ENCODE measurements at regions of chr6 and their contacts with region 1.

Region 1: GRCh38 chr6:108689247-108690161 is 128.8 kb downstream of the FOXO3 start:
- DNase-seq: peak; percentile 93
- H3K4me3 Mint-ChIP-seq: peak overlapping the region; percentile 49
- H3K27ac Mint-ChIP-seq: peak overlapping the region; percentile 92
- H3K4me1 Mint-ChIP-seq: peaks cover 66% of the 10 kb centered on the region
- H3K27me3 Mint-ChIP-seq: no peaks in the 10 kb centered on the region
- CTCF ChIP-seq: no peak

Region 2: DNA sequence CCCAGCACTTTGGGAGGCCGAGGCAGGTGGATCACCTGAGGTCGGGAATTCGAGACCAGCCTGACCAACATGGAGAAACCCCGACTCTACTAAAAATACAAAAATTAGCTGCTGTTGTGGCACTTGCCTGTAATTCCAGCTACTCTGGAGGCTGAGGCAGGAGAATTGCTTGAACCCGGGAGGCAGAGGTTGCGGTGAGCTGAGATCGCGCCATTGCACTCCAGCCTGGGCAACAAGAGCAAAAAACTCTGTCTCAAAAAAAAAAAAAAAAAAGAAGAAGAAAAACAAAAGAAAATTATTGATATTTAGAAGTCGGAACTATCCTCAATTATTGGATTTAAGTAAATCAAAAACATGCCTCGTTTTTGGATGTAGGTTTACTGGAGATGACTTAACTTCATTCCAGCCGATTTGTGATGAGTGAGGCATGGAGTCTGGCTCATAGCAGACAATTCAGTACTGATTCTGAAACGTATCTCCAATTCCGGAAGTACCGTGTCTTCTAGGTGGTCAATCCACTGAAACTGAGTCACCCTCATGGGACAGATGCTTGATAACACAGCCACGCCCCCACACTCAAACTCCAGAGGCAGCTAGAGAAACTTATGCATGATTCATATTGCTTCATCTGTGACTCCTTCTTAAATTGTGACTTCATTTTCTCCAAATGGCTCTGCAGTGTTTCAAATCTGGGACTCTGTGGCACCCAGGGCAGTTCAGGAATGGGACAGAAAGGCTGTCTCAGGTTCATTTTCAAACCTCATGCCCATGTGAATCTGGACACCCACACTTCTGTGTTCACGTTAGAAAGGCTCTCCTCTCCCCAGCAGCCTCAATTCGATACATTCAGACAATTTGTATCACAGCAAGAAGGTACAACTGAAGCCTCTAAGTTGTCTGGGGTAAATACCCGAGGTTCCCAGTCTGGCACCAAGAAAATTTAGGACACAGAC is 48.4 kb after region 1 on chr6:
- CTCF ChIA-PET with region 1: interaction called, 3 read pairs
- intact Hi-C with region 1: loop called (anchors 5 kb)
- DNase-seq: peak; percentile 83
- H3K4me3 Mint-ChIP-seq: peak overlapping the region; percentile 56
- H3K27ac Mint-ChIP-seq: peak overlapping the region; percentile 99
- H3K4me1 Mint-ChIP-seq: peaks cover 81% of the 10 kb centered on the region
- H3K27me3 Mint-ChIP-seq: no peaks in the 10 kb centered on the region
- CTCF ChIP-seq: no peak

Region 3: DNA sequence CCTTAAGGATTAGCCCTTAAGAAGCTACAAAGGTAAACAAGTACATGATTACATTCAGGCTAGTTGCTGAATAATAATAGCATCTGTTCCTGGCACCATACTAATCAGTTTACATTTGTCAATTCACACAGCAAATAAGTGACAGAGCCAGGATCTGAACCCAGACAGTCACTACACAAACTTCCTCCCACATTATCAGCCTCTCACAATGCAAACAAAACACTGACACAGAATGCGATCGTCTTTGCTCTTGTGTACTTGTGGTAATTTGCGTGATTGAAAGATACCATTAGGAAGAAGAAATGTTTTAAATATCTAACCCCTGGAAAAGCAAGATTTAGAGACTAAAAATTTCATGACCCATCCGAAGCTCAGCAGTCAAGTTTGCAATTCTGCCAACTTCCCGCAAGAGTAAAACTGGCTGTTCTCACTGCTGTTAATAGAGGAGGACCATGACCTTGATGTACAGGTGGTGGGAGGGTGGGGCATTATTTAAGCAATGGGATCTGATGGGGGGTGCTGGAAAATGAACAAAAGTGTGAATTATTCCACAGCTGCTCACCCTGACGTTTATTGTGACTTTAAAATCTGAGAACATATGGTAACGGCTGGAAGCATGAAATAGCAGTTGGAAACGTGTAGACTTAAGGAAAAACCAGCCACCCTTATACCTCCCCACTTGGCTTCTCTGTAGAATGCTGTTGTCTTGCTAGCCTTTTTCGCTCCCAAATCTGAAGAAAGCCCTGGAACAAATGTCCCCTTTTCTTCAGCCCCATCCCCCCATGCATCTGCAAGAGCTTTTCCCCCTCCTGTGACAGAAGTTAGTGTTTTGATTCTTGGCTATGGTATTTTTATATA is 63.5 kb after region 1 on chr6:
- CTCF ChIA-PET with region 1: interaction called, 11 read pairs
- intact Hi-C with region 1: no loop called
- DNase-seq: no peak
- H3K4me3 Mint-ChIP-seq: no peak overlapping the region
- H3K27ac Mint-ChIP-seq: no peak overlapping the region
- H3K4me1 Mint-ChIP-seq: peaks cover 8% of the 10 kb centered on the region
- H3K27me3 Mint-ChIP-seq: no peaks in the 10 kb centered on the region
- CTCF ChIP-seq: no peak